ENCODE measurements at regions of chr18 and their contacts with region 1.

Region 1: DNA sequence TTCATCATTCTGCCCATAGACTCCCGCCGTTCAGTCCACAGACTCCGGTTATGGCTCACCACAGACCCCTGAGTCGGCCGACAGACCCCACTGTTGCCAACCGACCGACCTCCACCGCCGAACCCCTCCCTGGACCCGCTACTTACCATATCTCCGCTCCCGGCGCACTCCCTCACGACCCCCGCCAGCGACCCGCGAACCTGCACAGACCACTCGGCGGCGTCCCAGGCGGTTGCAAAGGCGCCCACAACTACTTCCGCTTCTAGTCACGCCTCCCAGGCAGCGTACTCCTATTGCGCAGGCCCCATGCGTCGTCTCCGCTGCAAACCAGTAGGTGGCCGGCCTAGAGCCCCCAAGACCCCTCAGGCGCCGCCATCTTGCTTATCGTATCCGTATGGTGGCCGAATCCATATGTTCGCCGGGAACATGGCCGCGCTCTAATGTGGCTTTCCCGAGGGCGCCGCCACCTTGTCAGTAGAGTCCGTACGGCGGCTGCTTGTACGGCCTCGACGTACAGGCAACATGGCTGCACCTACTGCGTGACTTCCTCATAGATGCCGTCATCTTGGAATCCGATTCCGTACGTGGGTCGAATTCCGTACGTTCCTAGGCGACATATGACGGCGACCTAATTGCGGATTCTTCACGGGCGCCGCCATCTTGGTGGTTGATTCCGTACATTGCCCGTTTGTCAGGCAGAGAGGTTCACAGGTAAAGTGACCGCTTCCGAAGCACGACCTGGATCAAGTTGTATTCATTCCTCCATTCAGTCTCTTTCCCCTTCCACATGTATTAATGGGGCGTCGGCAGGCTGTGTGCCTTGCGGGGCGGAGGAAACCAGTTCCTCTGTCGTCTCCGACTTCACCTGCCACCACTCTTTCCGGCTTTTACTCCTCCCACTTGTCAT is at the start of gene CXXC1:
- DNase-seq: peak; percentile 95
- H3K4me3 Mint-ChIP-seq: peak within 1 kb of the TSS; percentile 93
- H3K27ac Mint-ChIP-seq: peak within 1 kb of the TSS; percentile 97
- H3K4me1 Mint-ChIP-seq: peaks cover 31% of the 10 kb centered on the region
- H3K27me3 Mint-ChIP-seq: no peaks in the 10 kb centered on the region
- total RNA-seq, gene CXXC1: 114 and 117 TPM in 2 replicates

Region 2: DNA sequence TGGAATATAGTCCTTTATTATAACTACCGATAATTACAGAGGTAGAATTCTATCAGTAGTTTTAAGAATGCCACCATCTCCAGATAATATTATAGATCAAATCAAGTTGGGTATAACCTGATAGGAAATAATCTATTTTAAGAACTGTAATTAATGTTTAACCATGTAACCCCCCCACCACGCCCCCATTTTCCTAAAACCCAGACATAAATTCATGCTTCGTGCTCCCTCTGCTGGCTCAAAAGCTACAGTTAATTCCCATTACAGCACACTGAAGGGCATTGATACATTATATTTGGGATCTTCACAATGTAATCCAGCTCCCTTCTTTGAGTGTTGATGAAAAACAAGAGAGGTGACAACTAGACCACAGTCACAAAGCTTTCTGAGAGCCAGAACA is 1109.0 kb before region 1 on chr18:
- intact Hi-C with region 1: loop called (anchors 10 kb)
- DNase-seq: no peak
- H3K4me3 Mint-ChIP-seq: no peak overlapping the region
- H3K27ac Mint-ChIP-seq: no peak overlapping the region
- H3K4me1 Mint-ChIP-seq: peaks cover 33% of the 10 kb centered on the region
- H3K27me3 Mint-ChIP-seq: peaks cover 2% of the 10 kb centered on the region

Region 3: GRCh38 chr18:50297621-50298442 is 10.1 kb after region 1 on chr18:
- intact Hi-C with region 1: loop called (anchors 1 kb)
- DNase-seq: peak; percentile 59
- H3K4me3 Mint-ChIP-seq: peak overlapping the region; percentile 74
- H3K27ac Mint-ChIP-seq: no peak overlapping the region
- H3K4me1 Mint-ChIP-seq: peaks cover 15% of the 10 kb centered on the region
- H3K27me3 Mint-ChIP-seq: peaks cover 24% of the 10 kb centered on the region

Region 4: DNA sequence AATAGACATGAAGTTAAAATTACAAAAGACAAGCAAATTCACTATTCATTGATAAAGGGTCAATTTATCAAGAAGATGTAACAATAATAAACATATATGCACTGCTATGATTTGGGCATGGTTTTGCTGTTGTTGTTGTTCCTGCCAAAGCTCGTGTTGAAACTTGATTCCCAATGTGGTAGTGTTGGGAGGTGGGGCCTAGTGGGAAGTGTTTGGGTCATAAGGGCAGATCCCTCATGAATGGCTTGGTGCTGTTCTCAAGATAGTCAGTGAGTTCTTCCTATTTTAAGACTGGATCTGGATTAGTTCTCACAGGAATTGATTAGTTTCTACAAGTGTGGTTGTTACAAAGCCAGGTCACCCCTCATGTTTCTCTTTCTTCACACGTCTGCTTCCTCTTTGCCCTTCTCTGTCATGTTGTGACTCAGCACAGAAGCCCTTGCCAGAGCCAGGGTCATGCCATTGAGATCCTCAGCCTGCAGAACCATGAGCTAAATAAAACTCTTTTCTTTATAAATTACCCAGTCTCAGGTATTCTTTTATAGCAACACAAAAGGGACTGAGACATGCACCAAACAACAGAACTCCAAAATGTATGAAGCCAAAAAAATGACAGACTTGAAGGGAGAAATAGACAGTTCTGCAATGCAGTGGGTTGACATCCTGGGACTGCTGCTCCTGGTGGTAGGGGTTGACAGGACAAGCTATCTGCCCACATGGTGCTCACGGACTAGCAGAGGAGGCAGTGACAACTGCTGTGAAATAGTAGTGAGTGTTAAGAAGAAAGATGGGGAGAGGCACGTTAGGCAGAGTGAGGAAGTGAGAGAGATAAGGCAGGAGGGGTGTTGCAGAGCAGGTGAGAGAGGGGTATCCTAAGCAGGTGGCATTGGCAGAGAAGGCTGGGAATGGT is 68.6 kb after region 1 on chr18:
- intact Hi-C with region 1: loop called (anchors 1 kb)
- DNase-seq: no peak
- H3K4me3 Mint-ChIP-seq: no peak overlapping the region
- H3K27ac Mint-ChIP-seq: peak overlapping the region; percentile 27
- H3K4me1 Mint-ChIP-seq: peaks cover 14% of the 10 kb centered on the region
- H3K27me3 Mint-ChIP-seq: peaks cover 25% of the 10 kb centered on the region

Region 5: GRCh38 chr18:50401888-50402287 is 114.2 kb after region 1 on chr18:
- intact Hi-C with region 1: no loop called
- DNase-seq: no peak
- H3K4me3 Mint-ChIP-seq: no peak overlapping the region
- H3K27ac Mint-ChIP-seq: no peak overlapping the region
- H3K4me1 Mint-ChIP-seq: no peaks in the 10 kb centered on the region
- H3K27me3 Mint-ChIP-seq: peaks cover 39% of the 10 kb centered on the region

Region 6: DNA sequence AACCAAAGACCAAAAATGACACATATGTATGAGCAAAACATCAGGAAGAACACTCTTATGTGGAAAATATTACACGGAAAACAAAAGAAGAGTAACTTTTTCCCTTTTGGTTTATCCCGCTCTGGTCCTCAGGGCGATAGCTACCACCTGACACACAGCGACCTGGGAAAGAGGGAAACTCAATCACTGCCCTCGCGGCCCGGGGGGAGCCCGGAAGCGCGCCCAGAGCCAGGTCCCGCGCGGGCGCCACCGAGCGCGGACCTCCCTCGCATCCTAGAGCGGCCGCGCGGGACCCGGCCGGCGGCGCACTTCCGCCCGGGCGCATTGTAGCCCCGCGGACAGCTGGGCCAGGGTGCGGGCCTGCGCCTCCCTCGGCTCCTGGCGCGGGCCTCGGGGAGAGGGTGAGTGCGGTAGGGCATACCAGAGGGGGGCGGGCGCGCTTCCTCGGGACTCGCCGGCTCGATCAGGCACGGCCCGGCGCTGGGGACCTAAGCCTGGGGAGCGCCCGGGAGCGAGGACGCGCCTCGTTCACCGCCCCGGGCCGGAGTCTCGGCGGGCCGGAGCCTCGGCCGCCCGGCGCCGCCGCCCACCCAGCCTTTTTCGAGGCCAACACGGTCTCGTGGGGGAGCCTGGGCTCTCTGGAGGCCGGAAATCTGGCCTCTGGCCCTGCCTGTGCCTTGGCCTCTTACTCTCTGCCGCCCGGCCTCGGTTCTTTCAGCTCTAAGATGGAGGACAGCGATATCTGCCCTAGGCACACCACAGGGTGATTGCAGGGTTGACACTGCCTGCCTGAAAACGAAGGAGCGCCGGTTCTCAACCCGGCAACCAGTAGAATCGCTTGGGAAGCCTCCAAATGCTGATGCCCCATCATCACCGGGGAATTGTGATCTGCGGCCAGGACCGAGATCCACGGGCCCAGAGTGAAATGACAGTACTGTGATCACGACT is 680.3 kb after region 1 on chr18 and contains the start of gene ELAC1:
- intact Hi-C with region 1: loop called (anchors 10 kb)
- DNase-seq: peak; percentile 60
- H3K4me3 Mint-ChIP-seq: peak within 1 kb of the TSS; percentile 96
- H3K27ac Mint-ChIP-seq: peak within 1 kb of the TSS; percentile 94
- H3K4me1 Mint-ChIP-seq: peaks cover 22% of the 10 kb centered on the region
- H3K27me3 Mint-ChIP-seq: peaks cover 2% of the 10 kb centered on the region
- total RNA-seq, gene ELAC1: 6.7 and 7.7 TPM in 2 replicates

Region 7: GRCh38 chr18:51211552-51211951 is 923.9 kb after region 1 on chr18:
- intact Hi-C with region 1: loop called (anchors 5 kb)
- DNase-seq: peak; percentile 63
- H3K4me3 Mint-ChIP-seq: peak overlapping the region; percentile 7
- H3K27ac Mint-ChIP-seq: peak overlapping the region; percentile 62
- H3K4me1 Mint-ChIP-seq: peaks cover 14% of the 10 kb centered on the region
- H3K27me3 Mint-ChIP-seq: peaks cover 2% of the 10 kb centered on the region